GM18951 (cell line): ENCODE measurements at regions of chr5 and their contacts with region 1.

Region 1: GRCh38 chr5:90783460-90784333 is 225.1 kb downstream of the ADGRV1 start:
- POLR2A ChIP-seq: no peak

Region 2: DNA sequence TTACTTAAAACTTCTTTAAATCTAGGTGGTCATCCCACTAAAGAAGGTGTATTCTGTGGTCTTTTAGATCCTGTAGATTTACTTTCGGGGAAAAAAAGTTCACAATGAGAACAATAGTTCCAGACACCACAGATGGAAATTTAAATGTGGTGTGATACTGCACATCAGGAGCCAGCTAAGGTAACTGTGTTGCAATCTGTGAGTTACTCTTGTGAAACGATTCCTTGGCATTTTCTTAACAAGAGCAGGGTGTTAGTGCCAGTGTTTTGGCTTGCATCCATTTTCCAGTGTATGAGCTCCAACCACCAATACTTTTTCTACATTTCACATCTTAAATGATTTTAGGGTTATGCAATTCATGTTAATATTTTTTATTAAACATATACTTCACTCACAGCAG is 1048.6 kb before region 1 on chr5:
- in situ Hi-C with region 1: no loop called
- POLR2A ChIP-seq: no peak

Region 3: GRCh38 chr5:90434116-90434714 is 349.5 kb before region 1 on chr5:
- in situ Hi-C with region 1: loop called (anchors 25 kb)
- POLR2A ChIP-seq: no peak

Region 4: DNA sequence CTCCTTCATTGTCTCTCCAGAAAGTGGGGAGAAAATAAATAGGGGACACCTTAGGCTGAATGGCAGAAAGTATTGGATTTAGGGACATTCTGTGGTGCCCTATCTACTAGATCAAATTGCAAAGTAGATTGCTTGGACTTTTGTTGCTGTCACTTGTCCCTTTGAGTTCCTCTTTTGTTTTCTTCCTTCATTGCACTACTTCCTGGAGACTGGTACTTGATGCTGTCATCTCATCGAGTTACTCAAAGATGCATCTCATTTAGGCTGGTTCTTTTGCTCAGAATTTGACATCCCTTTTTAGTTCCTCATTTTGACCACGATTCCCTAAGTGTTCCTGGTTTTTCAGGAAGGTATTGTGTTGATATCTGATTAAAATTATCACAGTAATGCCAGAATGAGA is 87.5 kb before region 1 on chr5:
- in situ Hi-C with region 1: loop called (anchors 10 kb)
- POLR2A ChIP-seq: no peak

Region 5: GRCh38 chr5:91162534-91163381 is 379.1 kb after region 1 on chr5:
- in situ Hi-C with region 1: no loop called
- POLR2A ChIP-seq: no peak